SK-N-SH (cell line): ENCODE measurements at regions of chr7 and their contacts with region 1.

Region 1: GRCh38 chr7:128041203-128041602 is 10.0 kb upstream of the LRRC4 start:
- DNase-seq: no peak
- H3K4me3 ChIP-seq: no peak overlapping the region
- H3K27ac ChIP-seq: no peak overlapping the region
- H3K4me1 ChIP-seq: peaks cover 2 to 11% of the 10 kb centered on the region in 2 experiments; a peak in 1 of 4 replicates
- H3K27me3 ChIP-seq: no peaks in the 10 kb centered on the region
- CTCF ChIP-seq: no peak
- EP300 ChIP-seq: peak in 1 of 2 experiments; percentile 48; a peak in 1 of 4 replicates
- RAD21 ChIP-seq: no peak

Region 2: GRCh38 chr7:127536741-127537140 is 504.5 kb before region 1 on chr7:
- CTCF ChIA-PET with region 1: no interaction called
- POLR2A ChIA-PET with region 1: no interaction called
- DNase-seq: peak; percentile 30
- H3K4me3 ChIP-seq: peak overlapping the region; percentile 11 to 14; a peak in 3 of 4 replicates
- H3K27ac ChIP-seq: no peak overlapping the region
- H3K4me1 ChIP-seq: peaks cover 0 to 7% of the 10 kb centered on the region in 2 experiments; a peak in 1 of 4 replicates
- H3K27me3 ChIP-seq: peaks cover 16% of the 10 kb centered on the region; the same call in 1 of the 2 replicates
- CTCF ChIP-seq: no peak
- EP300 ChIP-seq: no peak
- RAD21 ChIP-seq: no peak

Region 3: GRCh38 chr7:128053023-128053422 is 11.8 kb after region 1 on chr7:
- CTCF ChIA-PET with region 1: interaction called, 15 read pairs
- POLR2A ChIA-PET with region 1: no interaction called
- DNase-seq: peak; percentile 56
- H3K4me3 ChIP-seq: no peak overlapping the region
- H3K27ac ChIP-seq: peak overlapping the region in 1 of 2 experiments; percentile 19; a peak in 1 of 4 replicates
- H3K4me1 ChIP-seq: peaks cover 6 to 50% of the 10 kb centered on the region in 2 experiments; a peak in 3 of 4 replicates
- H3K27me3 ChIP-seq: no peaks in the 10 kb centered on the region
- CTCF ChIP-seq: no peak
- EP300 ChIP-seq: peak in 1 of 2 experiments; percentile 41; a peak in 1 of 4 replicates
- RAD21 ChIP-seq: no peak